Calu3 (cell line): ENCODE measurements at regions of chr2 and their contacts with region 1.

Region 1: DNA sequence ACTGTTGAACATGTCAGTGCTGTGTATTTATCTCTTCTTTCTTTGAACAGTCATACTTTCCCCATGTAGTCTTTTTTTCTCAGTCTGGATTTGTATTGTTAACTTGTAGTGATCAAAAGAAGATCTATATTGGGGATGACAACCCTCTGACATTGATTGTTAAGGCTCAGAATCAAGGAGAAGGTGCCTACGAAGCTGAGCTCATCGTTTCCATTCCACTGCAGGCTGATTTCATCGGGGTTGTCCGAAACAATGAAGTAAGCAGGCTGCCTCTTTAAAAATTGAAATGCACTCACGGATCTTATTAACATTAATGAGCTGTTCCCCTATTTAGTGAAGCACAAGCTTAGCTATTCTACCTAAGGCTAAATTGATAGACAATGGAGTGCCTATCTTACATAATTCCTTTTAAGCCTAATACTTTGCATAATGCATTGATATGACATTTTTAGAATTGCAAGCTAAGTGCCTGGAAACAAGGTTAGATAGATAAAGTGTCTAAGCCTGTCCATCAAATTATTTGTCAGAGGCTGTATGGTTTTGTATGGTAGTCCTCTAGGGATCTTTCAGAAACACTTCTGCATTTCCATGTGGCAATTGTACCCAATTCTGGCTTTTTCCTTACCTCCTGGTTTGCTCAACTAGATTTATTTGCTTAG is 29.3 kb upstream of the FAM171B start:
- DNase-seq: no peak
- H3K4me3 Mint-ChIP-seq: no peak overlapping the region
- H3K27ac Mint-ChIP-seq: no peak overlapping the region
- H3K4me1 Mint-ChIP-seq: no peaks in the 10 kb centered on the region
- H3K27me3 Mint-ChIP-seq: no peaks in the 10 kb centered on the region
- CTCF ChIP-seq: no peak

Region 2: GRCh38 chr2:186675380-186675779 is 10.9 kb after region 1 on chr2:
- CTCF ChIA-PET with region 1: no interaction called
- intact Hi-C with region 1: loop called (anchors 1 kb)
- DNase-seq: no peak
- H3K4me3 Mint-ChIP-seq: no peak overlapping the region
- H3K27ac Mint-ChIP-seq: no peak overlapping the region
- H3K4me1 Mint-ChIP-seq: no peaks in the 10 kb centered on the region
- H3K27me3 Mint-ChIP-seq: no peaks in the 10 kb centered on the region
- CTCF ChIP-seq: no peak